ENCODE measurements at regions of chr20 and their contacts with region 1.

Region 1: GRCh38 chr20:31795390-31795789 is 23.8 kb upstream of the MYLK2 start:
- DNase-seq: no peak
- H3K4me3 ChIP-seq: no peak overlapping the region
- H3K27ac ChIP-seq: no peak overlapping the region
- H3K4me1 ChIP-seq: peaks cover 3% of the 10 kb centered on the region
- H3K27me3 ChIP-seq: no peaks in the 10 kb centered on the region
- CTCF ChIP-seq: no peak
- POLR2A ChIP-seq: no peak

Region 2: GRCh38 chr20:31760519-31761240 is 34.7 kb before region 1 on chr20:
- CTCF ChIA-PET with region 1: no interaction called
- POLR2A ChIA-PET with region 1: no interaction called
- dilution Hi-C with region 1: no loop called
- intact Hi-C with region 1: loop called (anchors 5 kb)
- DNase-seq: no peak
- H3K4me3 ChIP-seq: no peak overlapping the region
- H3K27ac ChIP-seq: no peak overlapping the region
- H3K4me1 ChIP-seq: no peaks in the 10 kb centered on the region
- H3K27me3 ChIP-seq: no peaks in the 10 kb centered on the region
- CTCF ChIP-seq: no peak
- POLR2A ChIP-seq: no peak